GM12878 (cell line): ENCODE measurements at regions of chr18 and their contacts with region 1.

Region 1: DNA sequence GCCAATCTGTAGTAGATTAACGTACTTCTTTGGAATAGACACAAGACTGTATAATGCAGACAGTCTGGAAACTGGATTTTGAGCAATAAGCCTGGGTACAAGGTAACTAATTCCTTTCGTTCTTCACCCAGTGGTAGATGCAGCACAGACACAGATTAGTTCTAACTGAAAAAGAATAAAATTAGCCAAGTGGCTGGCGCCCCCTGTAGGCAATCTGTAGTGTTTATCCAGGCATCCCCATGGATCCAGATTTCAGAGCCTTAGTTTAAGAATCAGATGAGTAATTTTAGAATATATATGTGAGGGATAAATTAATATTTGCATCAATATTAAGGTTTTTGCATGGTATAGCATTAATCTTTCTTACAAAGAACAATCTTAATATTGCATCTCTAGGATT is 563.9 kb downstream of the DCC start:
- DNase-seq: no peak
- ATAC-seq: peak; percentile 82
- H3K4me3 ChIP-seq: no peak overlapping the region
- H3K27ac ChIP-seq: no peak overlapping the region
- H3K4me1 ChIP-seq: no peaks in the 10 kb centered on the region
- H3K27me3 ChIP-seq: no peaks in the 10 kb centered on the region
- CTCF ChIP-seq: peak; percentile 46 to 55 (median 46)
- EP300 ChIP-seq: no peak
- POLR2A ChIP-seq: no peak
- RAD21 ChIP-seq: peak; percentile 63

Region 2: GRCh38 chr18:52716973-52717372 is 186.9 kb before region 1 on chr18:
- CTCF ChIA-PET with region 1: no interaction called
- POLR2A ChIA-PET with region 1: no interaction called
- RAD21 ChIA-PET with region 1: no interaction called
- SMC1A ChIA-PET with region 1: no interaction called
- in situ Hi-C with region 1: no loop called
- intact Hi-C with region 1: loop called (anchors 10 kb)
- DNase-seq: no peak
- ATAC-seq: no peak; the same call in 2 of the 3 replicates
- H3K4me3 ChIP-seq: no peak overlapping the region
- H3K27ac ChIP-seq: no peak overlapping the region
- H3K4me1 ChIP-seq: no peaks in the 10 kb centered on the region
- H3K27me3 ChIP-seq: no peaks in the 10 kb centered on the region
- CTCF ChIP-seq: peak in 1 of 3 experiments; percentile 5; a peak in 1 of 6 replicates
- EP300 ChIP-seq: no peak
- POLR2A ChIP-seq: no peak
- RAD21 ChIP-seq: no peak